Activated CD4-positive, alpha-beta T cell treated with anti-CD3 and anti-CD28 coated beads for 36 hours (primary cell): ENCODE measurements at regions of chr1 and their contacts with region 1.

Region 1: DNA sequence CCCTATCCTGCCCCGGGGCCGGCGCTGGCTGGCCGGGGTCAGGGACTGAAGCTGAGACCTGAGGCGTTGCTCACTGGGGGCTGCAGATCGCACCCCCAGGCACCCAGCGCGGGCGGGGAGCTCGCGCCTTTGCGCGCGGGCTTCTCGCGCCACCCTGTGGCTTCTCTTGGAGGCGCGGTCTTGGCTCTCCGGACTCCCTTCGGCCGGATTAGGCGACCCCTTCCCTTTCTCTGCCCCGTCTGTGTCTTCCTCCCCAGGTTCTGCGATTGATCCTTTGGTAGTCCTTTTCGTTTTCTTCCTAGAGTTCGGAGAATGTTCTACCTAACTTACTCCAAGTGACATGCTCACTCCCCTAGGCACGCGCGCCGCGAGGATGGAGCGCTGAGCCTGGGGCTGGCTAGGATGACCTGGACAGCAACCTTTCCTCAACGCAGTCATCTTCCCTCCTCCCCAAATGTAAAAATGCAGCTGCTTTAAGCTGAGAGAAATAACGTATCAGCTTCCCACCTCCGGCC is 495 bp upstream of the NTRK1 start:
- DNase-seq: peak; percentile 77
- ATAC-seq: peak; percentile 47
- H3K4me3 Mint-ChIP-seq: peak overlapping the region; percentile 56
- H3K27ac Mint-ChIP-seq: no peak overlapping the region
- H3K4me1 Mint-ChIP-seq: peaks cover 25% of the 10 kb centered on the region
- H3K27me3 Mint-ChIP-seq: peaks cover 45% of the 10 kb centered on the region

Region 2: DNA sequence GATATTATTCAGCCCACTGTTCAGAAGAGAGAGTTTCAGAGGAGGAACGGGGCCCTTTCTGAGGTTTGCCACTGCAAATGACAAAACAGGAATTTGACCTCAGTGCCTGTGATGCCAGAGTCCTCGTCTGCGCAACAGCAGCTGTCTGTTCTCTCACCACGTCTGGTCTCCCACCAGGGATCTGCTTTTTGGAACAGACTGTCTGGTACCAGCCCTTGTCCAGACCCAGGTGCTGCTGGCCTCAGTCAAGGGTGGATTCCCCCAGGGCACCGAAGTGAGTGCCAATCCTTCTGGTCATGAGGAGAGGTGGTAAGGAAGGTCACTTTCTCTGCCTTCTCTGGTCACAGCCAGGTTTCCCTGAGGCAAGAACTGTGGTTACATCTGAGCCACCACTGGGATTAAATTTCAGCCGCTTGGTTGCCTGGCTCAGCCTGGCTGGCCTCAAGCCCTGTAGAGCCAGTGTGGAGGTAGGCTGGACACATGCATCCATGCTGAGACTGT is 220.5 kb before region 1 on chr1:
- CTCF ChIA-PET with region 1: no interaction called
- POLR2A ChIA-PET with region 1: no interaction called
- intact Hi-C with region 1: no loop called
- DNase-seq: no peak
- ATAC-seq: no peak
- H3K4me3 Mint-ChIP-seq: no peak overlapping the region
- H3K27ac Mint-ChIP-seq: no peak overlapping the region
- H3K4me1 Mint-ChIP-seq: peaks cover 22% of the 10 kb centered on the region
- H3K27me3 Mint-ChIP-seq: peaks cover 68% of the 10 kb centered on the region

Region 3: GRCh38 chr1:156927215-156928042 is 67.3 kb after region 1 on chr1:
- CTCF ChIA-PET with region 1: interaction called, 13 read pairs
- POLR2A ChIA-PET with region 1: no interaction called
- intact Hi-C with region 1: no loop called
- DNase-seq: peak; percentile 87
- ATAC-seq: peak; percentile 76
- H3K4me3 Mint-ChIP-seq: no peak overlapping the region
- H3K27ac Mint-ChIP-seq: no peak overlapping the region
- H3K4me1 Mint-ChIP-seq: peaks cover 25% of the 10 kb centered on the region
- H3K27me3 Mint-ChIP-seq: peaks cover 64% of the 10 kb centered on the region

Region 4: DNA sequence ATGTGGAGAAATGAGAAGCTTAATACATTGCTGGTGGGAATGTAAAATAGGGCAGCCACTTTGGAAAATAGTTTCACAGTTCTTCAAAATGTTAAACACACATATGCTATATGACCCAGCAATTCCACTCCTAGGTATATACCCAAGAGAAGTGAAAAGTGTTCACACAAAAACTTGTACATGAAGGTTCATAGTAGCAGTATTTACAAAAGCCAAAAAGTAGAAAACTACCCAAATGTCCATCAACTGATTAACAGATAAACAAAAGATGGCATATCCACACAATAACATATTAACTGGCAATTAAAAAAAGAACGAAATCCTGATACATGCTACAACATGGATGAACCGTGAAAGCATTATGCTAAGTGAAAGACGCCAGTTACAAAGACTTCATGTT is 151.7 kb after region 1 on chr1:
- CTCF ChIA-PET with region 1: no interaction called
- POLR2A ChIA-PET with region 1: no interaction called
- intact Hi-C with region 1: no loop called
- DNase-seq: no peak
- ATAC-seq: no peak
- H3K4me3 Mint-ChIP-seq: no peak overlapping the region
- H3K27ac Mint-ChIP-seq: no peak overlapping the region
- H3K4me1 Mint-ChIP-seq: no peaks in the 10 kb centered on the region
- H3K27me3 Mint-ChIP-seq: peaks cover 21% of the 10 kb centered on the region